KBM-7 (cell line): ENCODE measurements at regions of chr4 and their contacts with region 1.

Region 1: GRCh38 chr4:48963042-48963679 is 22.9 kb upstream of the CWH43 start:
- DNase-seq: peak; percentile 79

Region 2: DNA sequence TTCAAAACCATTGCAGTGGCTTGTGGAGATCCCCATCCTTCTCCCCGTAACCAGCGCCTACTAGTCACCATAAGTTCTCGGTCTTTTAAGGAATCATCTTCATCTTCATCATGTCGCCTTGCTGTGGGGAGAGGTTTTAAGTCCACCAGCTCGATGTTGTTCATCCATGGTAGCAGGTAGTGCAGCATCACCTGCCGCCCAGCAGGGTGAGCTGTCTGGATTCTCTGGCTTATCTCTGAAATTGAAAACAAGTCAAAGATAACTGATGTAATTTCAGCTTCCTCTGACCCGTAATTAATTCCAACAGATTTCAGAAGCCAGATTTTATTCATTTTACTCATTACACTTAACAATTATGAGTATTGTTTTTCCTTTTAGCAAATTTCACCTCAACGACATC is 405.7 kb before region 1 on chr4:
- in situ Hi-C with region 1: loop called (anchors 25 kb)
- DNase-seq: peak; percentile 22